BJ (cell line): ENCODE measurements at regions of chr6 and their contacts with region 1.

Region 1: DNA sequence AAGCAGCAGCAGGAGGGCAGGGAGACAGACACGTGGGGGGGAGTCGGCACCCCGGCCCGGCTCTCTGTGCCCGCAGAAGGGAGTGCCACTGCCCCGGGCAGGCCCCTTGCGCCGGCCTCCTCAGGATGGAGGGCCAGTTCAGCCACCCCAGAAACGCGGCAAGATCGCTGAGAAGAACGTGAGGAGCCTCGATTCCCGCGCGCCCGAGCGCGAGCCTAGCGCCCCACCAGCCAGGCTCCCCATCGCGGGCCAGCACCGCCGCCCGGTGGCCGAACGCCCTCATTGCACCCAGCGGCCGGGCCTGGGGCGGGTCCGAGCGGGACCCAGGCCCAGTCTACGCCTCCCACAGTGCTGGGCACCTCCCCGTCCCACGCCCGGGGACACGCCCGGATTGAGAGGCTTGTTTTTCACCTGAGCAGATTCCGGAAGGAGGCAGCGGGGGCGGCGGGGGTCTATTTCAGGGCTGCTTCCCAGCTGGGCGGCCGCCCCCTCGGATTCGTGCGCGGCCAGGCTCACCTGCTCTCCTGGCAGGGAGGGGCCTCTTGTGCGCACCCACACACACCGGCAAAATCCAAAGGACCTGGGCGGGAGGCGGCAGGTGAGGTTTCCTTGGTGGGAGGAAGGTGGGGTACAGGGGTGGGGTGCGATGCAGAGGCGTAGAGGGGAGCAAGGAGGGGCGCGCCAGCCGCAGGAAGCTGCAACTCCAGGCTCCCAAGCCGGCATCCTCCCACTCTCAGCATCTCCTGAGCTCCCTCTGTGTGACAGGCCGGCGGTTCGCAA is 9.0 kb upstream of the GRM4 start:
- DNase-seq: no peak
- H3K4me3 ChIP-seq: peak overlapping the region; percentile 20; the same call in 1 of the 2 replicates
- H3K27me3 ChIP-seq: peaks cover 31% of the 10 kb centered on the region
- CTCF ChIP-seq: peak; percentile 73

Region 2: DNA sequence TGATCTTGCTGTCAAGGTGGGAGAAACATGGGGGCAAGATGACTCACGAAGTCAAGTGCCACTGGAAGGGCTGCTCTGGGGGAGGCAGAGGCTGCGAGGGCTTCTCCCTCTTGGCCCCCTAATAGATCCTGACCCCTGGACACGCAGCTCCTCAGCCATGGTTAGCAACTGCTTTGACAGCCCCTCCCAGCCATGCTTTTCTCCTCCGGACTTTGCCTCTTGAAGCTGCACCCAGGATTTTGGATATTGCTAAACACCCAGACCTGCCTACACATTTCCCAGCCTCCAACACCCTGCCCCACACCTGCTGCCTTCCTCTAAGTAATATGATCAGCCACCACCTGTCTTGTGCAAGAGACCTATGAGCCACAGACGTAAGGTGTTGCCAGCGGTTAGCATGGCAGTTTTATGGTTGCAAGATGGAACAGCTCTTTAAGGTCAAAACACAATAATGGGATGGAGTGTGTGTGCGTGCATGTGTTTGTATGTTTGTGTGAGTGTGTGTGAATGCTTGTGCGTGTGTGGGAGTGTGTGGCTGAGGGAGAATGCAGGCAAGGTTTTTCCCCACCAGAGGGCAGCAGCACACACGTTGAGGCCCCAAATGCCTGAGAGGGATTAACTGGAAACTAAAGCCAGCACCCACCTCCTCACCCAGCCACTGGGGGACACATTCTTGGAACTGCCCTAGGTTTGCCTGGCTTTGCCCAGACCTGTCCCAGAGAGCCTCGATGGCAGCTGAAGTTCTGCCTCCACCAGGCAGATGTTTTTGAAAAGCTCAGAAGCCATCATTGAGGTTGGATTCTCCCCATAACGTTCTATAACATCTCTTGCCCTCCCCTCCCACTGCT is 410.6 kb before region 1 on chr6:
- CTCF ChIA-PET with region 1: interaction called, 29 read pairs
- POLR2A ChIA-PET with region 1: no interaction called
- DNase-seq: no peak
- H3K4me3 ChIP-seq: no peak overlapping the region
- H3K27me3 ChIP-seq: no peaks in the 10 kb centered on the region
- CTCF ChIP-seq: peak; percentile 93

Region 3: DNA sequence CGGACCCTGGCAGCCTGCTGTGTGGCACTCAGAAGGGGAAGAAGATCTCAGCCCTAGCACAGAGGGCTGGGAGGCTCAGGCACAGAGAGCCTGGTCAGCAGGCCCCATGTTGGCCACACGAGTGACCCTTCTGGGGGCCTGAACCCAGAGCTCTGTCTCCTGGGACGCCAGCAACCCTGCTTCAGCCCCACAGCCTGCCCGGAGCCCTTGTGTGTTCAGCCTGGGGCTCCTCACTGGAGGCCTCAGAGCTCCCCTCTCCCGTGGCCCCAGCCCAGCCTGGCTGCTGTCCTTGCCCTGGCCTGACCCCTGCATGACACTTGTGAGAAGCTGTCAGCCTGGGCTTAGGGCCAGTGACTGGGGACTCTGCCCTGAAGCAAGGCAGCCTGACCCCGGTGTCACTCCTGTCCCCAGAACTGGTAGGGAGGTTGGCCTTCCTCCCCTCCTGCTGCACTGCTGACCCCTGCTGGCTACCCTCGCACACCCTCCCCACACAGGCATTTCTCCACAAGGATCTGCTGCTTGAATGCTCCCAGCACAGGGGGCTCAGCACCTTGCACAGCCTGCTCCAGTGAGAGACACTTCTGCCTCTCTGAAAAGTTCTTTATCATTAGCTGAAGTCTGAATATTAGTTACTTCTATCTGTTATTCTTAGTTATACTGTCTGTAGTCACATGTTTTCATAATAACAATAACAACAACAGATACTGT is 392.8 kb before region 1 on chr6:
- CTCF ChIA-PET with region 1: interaction called, 30 read pairs
- POLR2A ChIA-PET with region 1: no interaction called
- DNase-seq: no peak
- H3K4me3 ChIP-seq: no peak overlapping the region
- H3K27me3 ChIP-seq: no peaks in the 10 kb centered on the region
- CTCF ChIP-seq: peak; percentile 85

Region 4: GRCh38 chr6:34055223-34055933 is 99.5 kb before region 1 on chr6:
- CTCF ChIA-PET with region 1: interaction called, 57 read pairs
- POLR2A ChIA-PET with region 1: no interaction called
- DNase-seq: no peak
- H3K4me3 ChIP-seq: no peak overlapping the region
- H3K27me3 ChIP-seq: peaks cover 6% of the 10 kb centered on the region
- CTCF ChIP-seq: peak; percentile 84

Region 5: GRCh38 chr6:34172941-34173741 is 18.3 kb after region 1 on chr6:
- CTCF ChIA-PET with region 1: no interaction called
- POLR2A ChIA-PET with region 1: no interaction called
- DNase-seq: no peak
- H3K4me3 ChIP-seq: no peak overlapping the region
- H3K27me3 ChIP-seq: peaks cover 1% of the 10 kb centered on the region; the same call in 1 of the 2 replicates
- CTCF ChIP-seq: no peak